ENCODE measurements at regions of chr15 and their contacts with region 1.

Region 1: DNA sequence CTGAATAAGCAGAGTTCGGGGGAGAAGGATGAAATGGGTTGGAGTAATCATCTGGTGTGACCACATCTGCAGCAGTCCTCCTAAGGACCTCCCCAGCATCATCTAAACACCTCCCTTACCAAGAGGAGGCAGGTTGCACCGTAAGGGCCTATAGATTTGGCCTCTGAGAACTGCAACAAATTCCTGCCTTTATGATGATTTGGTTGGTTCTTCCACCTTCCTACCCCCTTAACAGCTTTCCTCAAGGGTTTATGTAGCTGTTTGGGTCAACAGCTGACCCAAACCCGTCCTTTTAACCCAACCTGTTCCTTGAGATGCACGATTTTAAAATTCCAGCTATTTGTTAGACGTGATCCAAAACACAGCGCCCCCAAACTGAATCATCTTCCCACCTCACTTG is 58.2 kb downstream of the AAGAB start:
- DNase-seq: no peak
- ATAC-seq: no peak
- H3K4me3 Mint-ChIP-seq: no peak overlapping the region
- H3K27ac Mint-ChIP-seq: no peak overlapping the region
- H3K4me1 Mint-ChIP-seq: peaks cover 21% of the 10 kb centered on the region
- H3K27me3 Mint-ChIP-seq: no peaks in the 10 kb centered on the region
- CTCF ChIP-seq: no peak

Region 2: DNA sequence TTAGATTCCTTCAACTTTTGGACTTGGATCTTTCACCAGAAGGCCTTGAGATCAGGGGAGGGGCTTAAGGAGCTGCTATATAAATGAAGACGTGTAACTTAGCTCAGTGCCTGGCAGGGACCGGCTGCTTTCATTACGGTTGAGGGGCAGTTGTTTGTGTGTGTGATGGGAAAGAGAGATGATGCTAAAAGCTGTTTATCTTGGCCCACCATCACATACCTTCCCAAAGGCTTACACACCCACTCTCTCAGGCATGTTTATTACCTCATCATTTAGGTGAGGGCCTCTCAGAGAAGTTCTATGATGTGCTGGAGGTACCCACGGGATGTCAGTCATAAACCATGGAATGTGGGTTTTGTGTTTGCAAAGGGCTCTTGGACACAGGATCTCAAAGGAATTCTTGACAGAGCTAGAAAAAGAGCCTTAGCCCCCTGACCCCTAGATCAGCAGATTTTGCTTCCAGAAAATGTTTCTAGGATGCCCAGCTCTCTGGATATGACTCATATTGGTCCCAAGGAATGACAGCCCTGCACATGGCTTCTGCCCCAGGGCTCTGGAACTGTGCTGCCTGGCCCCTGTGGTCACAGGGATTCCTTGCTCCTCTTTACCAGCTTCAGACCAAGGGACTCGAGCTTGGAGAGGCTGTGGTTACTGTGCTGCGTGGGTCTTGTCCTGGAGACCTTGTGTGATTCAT is 146.7 kb before region 1 on chr15:
- CTCF ChIA-PET with region 1: no interaction called
- POLR2A ChIA-PET with region 1: interaction called, 10 read pairs
- intact Hi-C with region 1: no loop called
- DNase-seq: no peak
- ATAC-seq: no peak
- H3K4me3 Mint-ChIP-seq: no peak overlapping the region
- H3K27ac Mint-ChIP-seq: no peak overlapping the region
- H3K4me1 Mint-ChIP-seq: peaks cover 38% of the 10 kb centered on the region
- H3K27me3 Mint-ChIP-seq: no peaks in the 10 kb centered on the region
- CTCF ChIP-seq: no peak

Region 3: DNA sequence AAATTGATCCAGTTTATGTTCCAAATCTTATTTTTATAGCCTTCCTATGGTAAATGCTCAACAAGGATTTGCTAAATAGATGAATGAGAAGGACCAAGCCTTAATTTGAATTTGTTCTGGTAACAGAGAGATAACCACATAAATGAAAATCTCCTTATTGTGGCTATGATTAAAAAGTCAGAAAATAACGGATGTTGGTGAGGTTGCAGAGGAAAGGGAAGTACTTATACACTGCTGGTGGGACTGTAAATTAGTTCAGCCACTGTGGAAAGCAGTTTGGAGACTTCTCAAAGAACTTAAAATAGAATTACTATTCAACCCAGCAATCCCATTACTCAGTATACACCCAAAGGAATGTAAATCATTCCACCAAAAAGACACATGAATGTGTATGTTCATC is 32.1 kb after region 1 on chr15:
- CTCF ChIA-PET with region 1: no interaction called
- POLR2A ChIA-PET with region 1: no interaction called
- intact Hi-C with region 1: no loop called
- DNase-seq: no peak
- ATAC-seq: no peak
- H3K4me3 Mint-ChIP-seq: no peak overlapping the region
- H3K27ac Mint-ChIP-seq: no peak overlapping the region
- H3K4me1 Mint-ChIP-seq: peaks cover 17% of the 10 kb centered on the region
- H3K27me3 Mint-ChIP-seq: no peaks in the 10 kb centered on the region
- CTCF ChIP-seq: no peak

Measured in activated B cell treated with CpG ODN at 0.5 μM for 24 hours (primary cell).